Gastrocnemius medialis (tissue), 4 donors: ENCODE measurements at regions of chr19 and their contacts with region 1.

Region 1: DNA sequence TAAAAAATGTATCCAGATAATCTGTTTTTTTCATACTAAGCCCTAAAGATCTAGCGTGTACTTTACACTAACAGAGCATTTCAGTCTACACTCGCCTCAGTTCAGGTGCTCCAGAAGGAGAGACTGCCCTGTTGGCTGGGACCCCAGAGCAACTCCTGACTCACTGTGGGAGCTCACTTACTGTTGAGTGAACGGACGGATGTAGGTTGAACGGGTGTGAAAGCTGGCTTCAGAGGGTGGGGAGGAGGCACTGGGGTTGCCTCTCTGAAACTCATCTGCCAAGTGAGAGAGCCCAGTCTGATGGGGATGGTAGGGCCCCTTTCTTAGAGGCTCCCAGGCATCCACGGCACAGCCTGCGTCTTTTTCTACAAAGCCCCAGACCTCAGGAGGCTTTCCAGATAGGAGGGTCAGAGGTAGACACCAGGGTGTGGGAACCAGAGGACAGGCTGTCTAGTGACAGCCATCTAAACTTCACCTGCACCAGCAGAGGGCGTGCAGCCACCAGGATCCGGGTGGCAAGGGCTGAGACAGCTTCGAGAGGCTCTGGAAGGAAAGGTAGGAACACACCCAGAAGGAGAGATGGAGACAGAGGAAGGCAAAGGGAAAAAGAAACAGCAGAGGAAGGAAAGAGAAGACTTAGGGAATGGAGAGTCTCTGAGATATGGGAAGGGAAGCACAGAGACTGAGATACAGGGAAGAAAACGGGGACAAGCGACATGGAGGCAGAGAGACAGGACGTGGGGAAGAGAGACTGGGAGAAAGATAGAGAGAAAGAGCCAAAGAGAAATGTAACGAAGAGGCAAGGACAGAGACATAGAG is 3.7 kb downstream of the KASH5 start:
- DNase-seq: peak; percentile 62 to 63
- ATAC-seq: peak; percentile 88 to 91
- H3K4me3 ChIP-seq: no peak overlapping the region
- H3K27ac ChIP-seq: no peak overlapping the region
- H3K4me1 ChIP-seq: no peaks in the 10 kb centered on the region
- H3K27me3 ChIP-seq: peaks cover 0 to 14% (median 7%) of the 10 kb centered on the region in 3 donors
- CTCF ChIP-seq: peak; percentile 60 to 79 (median 75)
- POLR2A ChIP-seq: no peak

Region 2: GRCh38 chr19:49434218-49434617 is 42.4 kb after region 1 on chr19:
- in situ Hi-C with region 1: no loop called
- intact Hi-C with region 1: no loop called
- DNase-seq: no peak
- ATAC-seq: no peak
- H3K4me3 ChIP-seq: no peak overlapping the region
- H3K27ac ChIP-seq: no peak overlapping the region
- H3K4me1 ChIP-seq: no peaks in the 10 kb centered on the region
- H3K27me3 ChIP-seq: peaks cover 85 to 90% (median 85%) of the 10 kb centered on the region in 3 donors
- CTCF ChIP-seq: no peak
- POLR2A ChIP-seq: no peak

Region 3: DNA sequence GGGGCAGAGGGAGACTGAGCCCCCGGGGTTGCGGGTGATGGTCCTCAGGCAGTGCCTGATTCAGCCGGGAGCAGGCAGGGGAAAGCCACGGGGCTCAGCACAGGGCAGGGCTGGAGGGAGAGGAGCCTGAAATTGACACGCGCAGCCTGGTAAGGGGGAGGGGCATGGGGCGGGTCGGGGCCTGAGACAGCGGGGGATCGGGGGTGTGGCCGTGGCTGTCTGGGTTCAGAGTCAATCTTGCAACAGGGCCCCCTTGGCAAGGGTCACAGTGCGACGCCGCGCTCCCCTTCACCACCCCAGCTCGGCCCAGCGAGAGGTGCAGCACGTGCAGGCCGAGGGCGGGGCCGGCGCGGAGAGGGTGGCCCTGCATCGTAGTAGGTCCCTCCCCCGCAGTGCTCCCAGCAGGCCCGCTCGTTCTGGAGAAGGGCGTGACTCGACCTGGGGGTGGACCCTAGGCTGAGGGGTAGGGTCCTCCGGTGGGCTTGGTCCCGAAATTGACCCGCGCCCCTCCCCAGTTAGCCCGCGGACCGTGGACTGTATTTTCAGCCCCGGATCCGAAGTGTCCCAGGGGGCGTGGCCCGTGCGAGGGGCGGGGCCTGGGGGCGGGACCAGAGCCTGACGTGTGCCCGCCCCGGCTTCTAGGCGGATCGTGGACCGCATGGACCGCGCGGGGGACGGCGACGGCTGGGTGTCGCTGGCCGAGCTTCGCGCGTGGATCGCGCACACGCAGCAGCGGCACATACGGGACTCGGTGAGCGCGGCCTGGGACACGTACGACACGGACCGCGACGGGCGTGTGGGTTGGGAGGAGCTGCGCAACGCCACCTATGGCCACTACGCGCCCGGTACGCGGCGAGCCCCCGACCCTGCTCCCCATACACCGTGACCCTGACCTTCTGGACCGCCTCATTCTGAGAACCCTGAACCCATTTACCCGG is 142.0 kb after region 1 on chr19:
- in situ Hi-C with region 1: loop called in 1 of 4 experiments (anchors 25 kb)
- intact Hi-C with region 1: no loop called
- DNase-seq: peak; percentile 61 to 68
- ATAC-seq: peak; percentile 93 to 96
- H3K4me3 ChIP-seq: peak overlapping the region; percentile 63 to 84 (median 75)
- H3K27ac ChIP-seq: peak overlapping the region; percentile 60 to 70 (median 65)
- H3K4me1 ChIP-seq: peaks cover 9 to 14% of the 10 kb centered on the region in 2 donors
- H3K27me3 ChIP-seq: no peaks in the 10 kb centered on the region
- CTCF ChIP-seq: peak; percentile 41 to 56 (median 43)
- POLR2A ChIP-seq: no peak